B cell (primary cell): ENCODE measurements at regions of chr9 and their contacts with region 1.

Region 1: GRCh38 chr9:37036776-37037502 is 2.9 kb upstream of the PAX5 start:
- DNase-seq: peak; percentile 90
- ATAC-seq: peak; percentile 35
- H3K4me3 ChIP-seq: peak overlapping the region; percentile 42 to 95 (median 86)
- H3K4me3 Mint-ChIP-seq: peak overlapping the region; percentile 89
- H3K27ac ChIP-seq: peak overlapping the region; percentile 98 to 100
- H3K27ac Mint-ChIP-seq: peak overlapping the region; percentile 96
- H3K4me1 ChIP-seq: peaks cover 42 to 64% of the 10 kb centered on the region in 2 donors
- H3K4me1 Mint-ChIP-seq: peaks cover 62% of the 10 kb centered on the region
- H3K27me3 ChIP-seq: no peaks in the 10 kb centered on the region
- H3K27me3 Mint-ChIP-seq: no peaks in the 10 kb centered on the region
- CTCF ChIP-seq: no peak

Region 2: DNA sequence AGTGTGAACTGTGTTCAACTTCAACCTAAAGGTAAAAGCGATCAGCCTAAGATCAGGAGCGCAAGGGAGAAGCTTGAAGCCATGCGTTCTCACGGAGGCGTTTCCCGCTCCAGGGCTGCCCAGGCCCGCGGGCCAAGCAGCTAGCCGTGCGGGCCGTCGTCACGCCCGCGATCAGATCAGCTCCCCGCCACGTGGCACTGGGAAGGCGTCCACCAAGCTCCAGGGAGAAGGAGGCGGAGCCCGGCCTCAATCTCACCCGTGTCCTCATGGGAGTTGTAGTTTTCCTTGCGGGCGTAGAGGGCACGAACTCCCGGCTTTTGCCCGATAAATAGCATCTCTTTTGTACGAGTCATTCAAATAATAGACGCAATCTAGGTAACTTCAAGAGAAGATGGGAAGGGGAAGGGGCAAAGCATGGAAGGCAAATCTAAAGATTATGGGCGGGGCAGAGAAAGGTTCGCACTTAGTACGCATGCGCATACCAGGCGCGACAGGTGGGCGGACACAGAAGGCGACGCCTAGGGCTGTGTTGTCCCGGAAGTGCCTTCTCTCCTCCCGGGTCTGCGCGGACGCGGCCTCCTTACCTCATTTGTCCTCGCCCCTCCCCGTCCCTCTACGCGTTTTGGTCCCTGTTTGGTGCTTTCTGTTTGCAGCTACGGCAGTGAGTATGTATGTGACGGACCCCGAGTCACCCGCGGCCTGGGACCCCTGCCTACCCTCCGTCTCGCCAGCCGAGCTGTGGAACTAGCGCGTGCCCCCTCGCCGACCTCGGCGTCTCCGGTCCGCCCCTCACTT is 42.6 kb after region 1 on chr9:
- CTCF ChIA-PET with region 1: interaction called, 13 read pairs
- POLR2A ChIA-PET with region 1: interaction called, 20 read pairs
- intact Hi-C with region 1: loop called (anchors 1 kb)
- DNase-seq: peak; percentile 96
- ATAC-seq: peak; percentile 95
- H3K4me3 ChIP-seq: peak overlapping the region; percentile 84 to 99 (median 95)
- H3K4me3 Mint-ChIP-seq: peak overlapping the region; percentile 99
- H3K27ac ChIP-seq: peak overlapping the region; percentile 91 to 97
- H3K27ac Mint-ChIP-seq: peak overlapping the region; percentile 98
- H3K4me1 ChIP-seq: peaks cover 54 to 55% of the 10 kb centered on the region in 2 donors
- H3K4me1 Mint-ChIP-seq: peaks cover 74% of the 10 kb centered on the region
- H3K27me3 ChIP-seq: no peaks in the 10 kb centered on the region
- H3K27me3 Mint-ChIP-seq: no peaks in the 10 kb centered on the region
- CTCF ChIP-seq: no peak

Region 3: DNA sequence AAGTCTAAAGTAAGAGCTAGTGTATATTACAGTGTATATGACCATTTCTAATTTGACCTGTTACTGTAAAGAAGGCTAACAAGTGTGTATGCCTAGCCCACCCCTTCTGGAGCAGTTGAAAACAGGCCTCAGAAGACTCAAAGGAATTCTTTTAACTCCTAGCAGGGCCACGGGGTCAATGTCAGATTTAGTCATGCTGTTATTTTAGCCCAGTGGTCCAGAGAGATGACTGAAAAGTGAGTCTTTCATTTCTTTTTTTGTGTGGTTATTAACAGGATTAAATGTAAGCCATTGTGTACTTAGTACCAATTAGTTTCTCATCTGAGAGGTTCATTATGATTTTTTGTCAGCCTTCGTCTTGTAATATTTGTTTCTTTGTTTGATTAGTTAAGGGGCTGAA is 107.8 kb after region 1 on chr9:
- CTCF ChIA-PET with region 1: interaction called, 4 read pairs
- POLR2A ChIA-PET with region 1: interaction called, 7 read pairs
- intact Hi-C with region 1: loop called (anchors 5 kb)
- DNase-seq: no peak
- ATAC-seq: no peak
- H3K4me3 ChIP-seq: no peak overlapping the region
- H3K4me3 Mint-ChIP-seq: peak overlapping the region; percentile 30
- H3K27ac ChIP-seq: peak overlapping the region; percentile 7 to 65
- H3K27ac Mint-ChIP-seq: peak overlapping the region; percentile 43
- H3K4me1 ChIP-seq: peaks cover 20 to 69% of the 10 kb centered on the region in 2 donors
- H3K4me1 Mint-ChIP-seq: peaks cover 60% of the 10 kb centered on the region
- H3K27me3 ChIP-seq: no peaks in the 10 kb centered on the region
- H3K27me3 Mint-ChIP-seq: no peaks in the 10 kb centered on the region
- CTCF ChIP-seq: no peak

Region 4: GRCh38 chr9:37302277-37302676 is 265.3 kb after region 1 on chr9:
- CTCF ChIA-PET with region 1: interaction called, 17 read pairs
- POLR2A ChIA-PET with region 1: interaction called, 4 read pairs
- intact Hi-C with region 1: loop called (anchors 2 kb)
- DNase-seq: peak; percentile 88
- ATAC-seq: peak; percentile 90
- H3K4me3 ChIP-seq: peak overlapping the region in 3 of 5 experiments; percentile 5 to 42 (median 17)
- H3K4me3 Mint-ChIP-seq: peak overlapping the region; percentile 82
- H3K27ac ChIP-seq: peak overlapping the region; percentile 79 to 88
- H3K27ac Mint-ChIP-seq: peak overlapping the region; percentile 96
- H3K4me1 ChIP-seq: peaks cover 79 to 84% of the 10 kb centered on the region in 2 donors
- H3K4me1 Mint-ChIP-seq: peaks cover 81% of the 10 kb centered on the region
- H3K27me3 ChIP-seq: no peaks in the 10 kb centered on the region
- H3K27me3 Mint-ChIP-seq: no peaks in the 10 kb centered on the region
- CTCF ChIP-seq: no peak

Region 5: DNA sequence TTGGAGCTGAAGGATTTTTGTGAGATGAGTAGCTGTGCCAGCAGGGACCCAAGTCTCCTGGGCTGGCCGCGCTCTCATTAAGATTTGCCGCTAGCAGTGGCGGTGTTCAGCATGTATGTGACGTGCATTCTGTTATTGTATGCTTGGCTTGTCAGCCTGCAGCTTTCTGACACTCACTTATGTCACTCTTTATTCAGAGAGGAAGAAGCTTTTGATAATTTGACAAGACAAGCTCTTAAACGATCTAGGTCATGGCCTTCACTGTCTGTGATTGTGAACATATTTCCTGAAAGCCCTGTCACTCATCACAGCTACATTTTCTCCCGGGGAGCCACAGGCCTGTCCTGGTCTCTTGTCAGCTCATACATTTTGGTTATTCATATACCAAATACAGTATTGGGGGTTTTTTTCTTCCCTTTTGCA is 287.3 kb after region 1 on chr9:
- CTCF ChIA-PET with region 1: interaction called, 50 read pairs
- POLR2A ChIA-PET with region 1: interaction called, 33 read pairs
- intact Hi-C with region 1: loop called (anchors 1 kb)
- DNase-seq: peak; percentile 90
- ATAC-seq: peak; percentile 84
- H3K4me3 ChIP-seq: peak overlapping the region in 2 of 5 experiments; percentile 7 to 31
- H3K4me3 Mint-ChIP-seq: peak overlapping the region; percentile 76
- H3K27ac ChIP-seq: peak overlapping the region; percentile 97 to 98
- H3K27ac Mint-ChIP-seq: peak overlapping the region; percentile 100
- H3K4me1 ChIP-seq: peaks cover 43 to 78% of the 10 kb centered on the region in 2 donors
- H3K4me1 Mint-ChIP-seq: peaks cover 62% of the 10 kb centered on the region
- H3K27me3 ChIP-seq: no peaks in the 10 kb centered on the region
- H3K27me3 Mint-ChIP-seq: no peaks in the 10 kb centered on the region
- CTCF ChIP-seq: no peak

Region 6: DNA sequence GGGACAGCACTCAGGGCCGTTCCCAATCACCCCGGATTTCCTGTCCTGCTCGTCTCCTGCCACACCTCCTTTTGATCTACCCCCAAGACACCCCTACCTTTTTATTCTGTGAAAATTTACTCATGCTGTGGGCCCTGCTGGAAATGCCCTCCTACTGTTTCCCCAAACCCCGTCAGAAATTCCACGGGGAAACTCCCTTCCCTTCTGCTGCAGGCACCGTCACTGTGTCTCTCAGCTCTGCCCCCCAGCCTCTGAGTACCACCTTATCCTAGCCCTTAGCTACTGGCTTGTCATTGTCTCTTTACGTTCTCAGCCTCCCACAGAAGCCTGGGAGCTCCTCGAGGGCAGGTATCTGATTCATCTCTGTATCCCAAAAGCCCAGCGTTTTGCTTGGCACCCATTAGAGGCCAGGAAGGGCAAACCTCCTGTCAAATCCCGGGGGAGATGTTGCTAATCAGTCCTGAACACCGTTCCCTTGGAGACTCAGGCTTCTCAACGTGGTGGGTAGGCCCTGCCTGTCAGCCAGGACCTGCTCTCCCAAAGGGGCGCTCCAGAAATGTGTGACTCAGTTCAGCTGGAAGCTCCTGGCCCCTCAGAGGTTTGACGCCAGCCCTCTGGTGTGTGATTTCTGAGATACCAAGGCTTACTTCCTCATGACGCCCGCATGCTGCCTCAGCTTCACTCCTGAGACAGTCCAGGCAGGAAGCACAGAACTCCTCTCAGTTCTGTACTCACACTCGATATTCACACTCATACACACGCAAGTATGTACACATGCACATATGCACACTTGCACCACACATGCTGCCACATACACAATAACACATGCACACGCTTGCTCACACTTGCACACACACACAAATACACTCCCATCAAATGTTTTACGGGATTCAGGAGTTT is 334.9 kb after region 1 on chr9:
- CTCF ChIA-PET with region 1: interaction called, 4 read pairs
- POLR2A ChIA-PET with region 1: interaction called, 7 read pairs
- intact Hi-C with region 1: loop called (anchors 2 kb)
- DNase-seq: peak; percentile 74
- ATAC-seq: peak; percentile 4
- H3K4me3 ChIP-seq: peak overlapping the region in 2 of 5 experiments; percentile 25 to 38
- H3K4me3 Mint-ChIP-seq: peak overlapping the region; percentile 70
- H3K27ac ChIP-seq: peak overlapping the region; percentile 78 to 94
- H3K27ac Mint-ChIP-seq: peak overlapping the region; percentile 88
- H3K4me1 ChIP-seq: peaks cover 95 to 100% of the 10 kb centered on the region in 2 donors
- H3K4me1 Mint-ChIP-seq: peaks cover 88% of the 10 kb centered on the region
- H3K27me3 ChIP-seq: no peaks in the 10 kb centered on the region
- H3K27me3 Mint-ChIP-seq: no peaks in the 10 kb centered on the region
- CTCF ChIP-seq: no peak